Dorsolateral prefrontal cortex (tissue), 120 donors: ENCODE measurements at regions of chr1 and their contacts with region 1.

Region 1: GRCh38 chr1:201530741-201531531 is 8.0 kb upstream of the NAV1 start:
- DNase-seq: peak in 9 of 10 donors; percentile 84 to 90 (median 88)
- H3K4me3 ChIP-seq: peak overlapping the region in 15 of 59 donors; percentile 3 to 38 (median 24)
- H3K27ac ChIP-seq: peak overlapping the region in 53 of 59 donors; percentile 0 to 81 (median 57)
- H3K27me3 ChIP-seq: no peaks in the 10 kb centered on the region
- CTCF ChIP-seq: peak; percentile 42 to 95 (median 88)

Region 2: DNA sequence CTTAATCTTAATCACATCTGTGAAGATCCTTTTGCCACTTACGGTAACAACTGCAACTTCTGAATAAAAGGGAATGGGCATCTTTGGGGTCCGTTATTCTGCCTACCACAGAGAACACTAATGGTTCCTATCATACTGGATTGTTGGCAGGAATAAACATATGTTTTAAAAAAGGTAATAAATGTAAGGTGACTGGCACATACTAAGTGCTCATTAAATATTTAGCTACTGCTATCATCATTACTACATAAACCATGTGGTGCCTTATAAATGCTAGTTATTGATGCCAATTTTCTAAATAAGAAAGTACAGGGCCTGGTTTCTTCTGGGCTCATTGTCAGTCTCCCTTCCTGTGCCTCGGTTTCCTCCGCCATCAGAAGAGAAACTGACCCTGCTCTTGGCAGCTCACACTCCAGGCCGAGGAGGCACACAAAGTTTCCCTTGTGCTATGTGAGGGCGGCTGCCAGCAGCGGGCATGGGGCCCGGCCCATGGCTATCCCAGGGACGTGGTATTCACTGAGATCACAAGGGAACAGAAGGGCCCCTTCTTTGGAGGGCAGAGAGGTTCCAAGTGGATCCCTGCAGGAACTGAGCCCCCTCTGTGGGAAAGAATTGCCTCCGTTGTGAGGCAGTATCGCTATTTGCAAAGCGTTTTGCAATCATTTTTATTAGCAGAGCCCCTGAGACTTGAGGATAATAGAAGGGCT is 34.2 kb after region 1 on chr1:
- intact Hi-C with region 1: loop called in 1 of 2 experiments (anchors 5 kb)
- DNase-seq: peak; percentile 26 to 98 (median 93)
- H3K4me3 ChIP-seq: peak overlapping the region in 16 of 59 donors; percentile 4 to 37 (median 18)
- H3K27ac ChIP-seq: peak overlapping the region; percentile 23 to 98 (median 93)
- H3K27me3 ChIP-seq: no peaks in the 10 kb centered on the region
- CTCF ChIP-seq: peak in 14 of 56 donors; percentile 16 to 59 (median 32)

Region 3: GRCh38 chr1:201593200-201593921 is 62.4 kb after region 1 on chr1:
- intact Hi-C with region 1: no loop called
- DNase-seq: no peak
- H3K4me3 ChIP-seq: no peak overlapping the region
- H3K27ac ChIP-seq: no peak overlapping the region
- H3K27me3 ChIP-seq: no peaks in the 10 kb centered on the region
- CTCF ChIP-seq: no peak

Region 4: GRCh38 chr1:201703621-201704439 is 172.9 kb after region 1 on chr1:
- intact Hi-C with region 1: loop called in 1 of 2 experiments (anchors 1 kb)
- DNase-seq: peak; percentile 75 to 92 (median 84)
- H3K4me3 ChIP-seq: peak overlapping the region in 18 of 59 donors; percentile 0 to 34 (median 23)
- H3K27ac ChIP-seq: peak overlapping the region in 57 of 59 donors; percentile 12 to 89 (median 75)
- H3K27me3 ChIP-seq: no peaks in the 10 kb centered on the region
- CTCF ChIP-seq: peak in 55 of 56 donors; percentile 96 to 100 (median 99)

Region 5: GRCh38 chr1:201792534-201793305 is 261.8 kb after region 1 on chr1:
- intact Hi-C with region 1: loop called in 1 of 2 experiments (anchors 2 kb)
- DNase-seq: peak; percentile 65 to 90 (median 83)
- H3K4me3 ChIP-seq: no peak overlapping the region
- H3K27ac ChIP-seq: peak overlapping the region; percentile 85 to 99 (median 96)
- H3K27me3 ChIP-seq: no peaks in the 10 kb centered on the region
- CTCF ChIP-seq: peak; percentile 88 to 99 (median 98)

Region 6: DNA sequence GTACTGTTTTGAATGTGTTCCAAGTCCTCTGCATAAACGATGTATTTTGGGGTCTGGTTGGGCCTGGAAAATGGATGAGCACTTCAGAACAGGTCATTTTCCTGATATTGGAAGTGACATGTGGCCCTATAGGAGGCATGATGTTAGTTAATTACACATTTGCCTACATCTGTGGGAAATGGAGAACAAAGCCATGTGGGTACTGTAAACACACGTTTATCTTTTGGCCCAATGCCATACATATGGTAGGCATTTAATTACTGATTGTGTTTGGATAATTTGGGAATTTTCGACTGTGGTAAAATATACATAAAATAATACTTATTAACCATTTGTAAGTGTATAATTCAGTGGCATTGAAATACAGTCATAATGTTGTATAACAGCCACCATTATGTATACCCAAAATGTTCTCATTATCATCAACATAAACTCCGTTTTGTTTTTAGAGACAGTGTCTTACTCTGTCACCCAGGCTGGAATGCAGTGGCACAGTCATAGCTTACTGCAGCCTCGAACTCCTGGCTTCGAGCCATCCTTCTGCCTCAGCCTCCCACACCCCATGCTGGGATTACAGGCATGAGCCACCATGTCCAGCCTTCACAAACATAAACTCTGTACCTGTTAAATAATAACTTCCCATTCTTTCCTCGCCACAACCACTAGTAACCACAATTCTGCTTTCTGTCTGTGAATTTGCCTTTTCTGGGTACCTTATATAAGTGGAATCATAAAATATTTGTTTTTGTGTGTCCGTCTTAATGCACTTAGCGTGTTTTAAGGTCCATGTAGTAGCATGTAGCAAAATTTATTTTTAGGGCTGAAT is 439.6 kb after region 1 on chr1:
- intact Hi-C with region 1: loop called in 1 of 2 experiments (anchors 10 kb)
- DNase-seq: peak in 4 of 10 donors; percentile 25 to 69 (median 36)
- H3K4me3 ChIP-seq: no peak overlapping the region
- H3K27ac ChIP-seq: peak overlapping the region in 38 of 59 donors; percentile 1 to 71 (median 38)
- H3K27me3 ChIP-seq: no peaks in the 10 kb centered on the region
- CTCF ChIP-seq: no peak